Activated CD4-positive, alpha-beta memory T cell treated with anti-CD3 and anti-CD28 coated beads for 36 hours (primary cell): ENCODE measurements at regions of chr9 and their contacts with region 1.

Region 1: GRCh38 chr9:128552153-128552743 is at the start of gene SPTAN1:
- DNase-seq: peak; percentile 97
- H3K4me3 Mint-ChIP-seq: peak within 1 kb of the TSS; percentile 96
- H3K27ac Mint-ChIP-seq: peak within 1 kb of the TSS; percentile 95
- H3K4me1 Mint-ChIP-seq: peaks cover 32% of the 10 kb centered on the region
- H3K27me3 Mint-ChIP-seq: no peaks in the 10 kb centered on the region
- total RNA-seq, gene SPTAN1: 228 TPM

Region 2: DNA sequence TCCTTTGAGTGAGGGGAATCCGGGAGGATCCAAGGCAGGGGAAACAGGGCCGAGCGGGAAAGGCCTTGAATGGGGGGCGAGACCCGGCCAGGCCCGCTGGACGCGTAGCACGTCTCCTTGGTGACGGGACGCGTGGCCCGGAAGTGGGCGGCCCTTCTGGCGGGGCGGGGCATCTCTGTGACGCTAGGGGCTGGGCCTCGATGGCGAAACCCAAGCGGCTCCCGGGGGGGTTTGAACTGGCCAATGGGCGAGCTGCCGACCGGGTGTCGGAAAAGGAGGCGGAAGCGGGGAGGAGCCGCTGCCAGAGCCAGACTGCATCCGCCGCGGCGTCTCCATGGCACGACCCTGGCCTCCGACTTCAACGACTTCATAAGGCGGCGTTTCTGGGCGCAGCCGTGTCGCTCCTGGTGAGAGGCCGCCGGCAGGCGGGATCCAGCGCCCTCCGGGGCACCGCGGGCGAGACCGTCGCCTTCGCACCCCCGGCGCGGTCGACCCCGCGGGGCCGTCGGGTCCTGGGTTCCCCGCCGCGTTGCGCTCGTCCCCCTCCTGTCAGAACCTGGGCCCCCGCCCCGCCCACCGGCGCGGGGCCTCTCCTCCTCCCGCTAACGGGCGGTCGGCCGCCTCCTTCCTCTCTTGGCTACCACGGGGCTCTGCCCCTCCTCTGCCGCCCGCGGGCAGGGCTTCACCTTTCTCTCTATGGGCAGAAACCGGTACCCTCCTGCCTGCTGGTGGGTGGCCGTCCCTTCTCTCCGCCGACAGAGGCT is 96.2 kb before region 1 on chr9 and contains the start of gene ODF2:
- CTCF ChIA-PET with region 1: no interaction called
- POLR2A ChIA-PET with region 1: no interaction called
- intact Hi-C with region 1: loop called (anchors 1 kb)
- DNase-seq: peak; percentile 99
- H3K4me3 Mint-ChIP-seq: peak within 1 kb of the TSS; percentile 85
- H3K27ac Mint-ChIP-seq: peak within 1 kb of the TSS; percentile 81
- H3K4me1 Mint-ChIP-seq: peaks cover 16% of the 10 kb centered on the region
- H3K27me3 Mint-ChIP-seq: no peaks in the 10 kb centered on the region
- total RNA-seq, gene ODF2: 68.9 to 72.8 TPM

Region 3: DNA sequence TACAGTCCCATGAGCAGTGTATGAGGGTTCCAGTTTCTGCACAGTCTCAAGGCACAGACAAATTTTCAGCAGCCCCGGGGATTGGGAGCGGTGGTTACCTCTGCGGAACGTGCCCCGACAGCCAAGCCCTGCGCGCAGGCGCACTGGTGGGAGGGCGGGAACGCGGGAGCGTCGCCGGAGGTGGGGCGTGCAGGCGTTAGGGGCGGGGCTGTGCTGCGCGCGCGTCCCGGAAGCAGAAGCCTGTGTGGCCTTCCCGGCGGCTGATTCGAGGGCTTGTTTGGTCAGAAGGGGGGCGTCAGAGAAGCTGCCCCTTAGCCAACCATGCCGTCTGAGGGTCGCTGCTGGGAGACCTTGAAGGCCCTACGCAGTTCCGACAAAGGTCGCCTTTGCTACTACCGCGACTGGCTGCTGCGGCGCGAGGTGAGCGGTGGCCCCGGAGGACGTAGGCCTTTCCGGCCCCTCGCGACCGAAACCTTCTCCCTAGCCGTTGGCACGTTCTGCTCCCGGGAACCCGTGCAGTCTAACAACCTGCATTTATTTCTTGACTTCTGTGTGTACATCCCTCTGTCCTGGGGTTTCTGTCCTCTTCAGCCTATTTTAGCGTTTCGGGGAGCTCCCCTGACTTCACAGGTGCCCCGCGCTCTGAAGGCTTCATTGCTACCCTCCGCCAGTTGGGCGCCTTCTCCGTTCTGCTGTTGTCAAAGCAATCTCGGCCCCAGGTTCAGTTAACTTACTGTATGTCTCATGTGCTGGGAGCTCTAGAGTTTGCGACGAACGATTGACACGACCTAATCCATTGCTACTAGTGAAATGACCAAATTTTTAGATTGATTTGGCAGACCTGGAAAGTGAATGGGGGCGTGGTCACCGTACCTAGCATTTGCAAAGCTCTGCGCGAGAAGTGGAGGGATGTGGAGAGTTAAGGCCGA is 47.5 kb before region 1 on chr9 and contains the start of gene GLE1:
- CTCF ChIA-PET with region 1: no interaction called
- POLR2A ChIA-PET with region 1: interaction called, 8 read pairs
- intact Hi-C with region 1: loop called (anchors 1 kb)
- DNase-seq: peak; percentile 97
- H3K4me3 Mint-ChIP-seq: peak within 1 kb of the TSS; percentile 99
- H3K27ac Mint-ChIP-seq: peak within 1 kb of the TSS; percentile 97
- H3K4me1 Mint-ChIP-seq: peaks cover 26% of the 10 kb centered on the region
- H3K27me3 Mint-ChIP-seq: no peaks in the 10 kb centered on the region
- total RNA-seq, gene GLE1: 55.6 to 57.0 TPM

Region 4: GRCh38 chr9:128521956-128522355 is 30.3 kb before region 1 on chr9:
- CTCF ChIA-PET with region 1: no interaction called
- POLR2A ChIA-PET with region 1: no interaction called
- intact Hi-C with region 1: no loop called
- DNase-seq: no peak
- H3K4me3 Mint-ChIP-seq: no peak overlapping the region
- H3K27ac Mint-ChIP-seq: no peak overlapping the region
- H3K4me1 Mint-ChIP-seq: no peaks in the 10 kb centered on the region
- H3K27me3 Mint-ChIP-seq: no peaks in the 10 kb centered on the region

Region 5: DNA sequence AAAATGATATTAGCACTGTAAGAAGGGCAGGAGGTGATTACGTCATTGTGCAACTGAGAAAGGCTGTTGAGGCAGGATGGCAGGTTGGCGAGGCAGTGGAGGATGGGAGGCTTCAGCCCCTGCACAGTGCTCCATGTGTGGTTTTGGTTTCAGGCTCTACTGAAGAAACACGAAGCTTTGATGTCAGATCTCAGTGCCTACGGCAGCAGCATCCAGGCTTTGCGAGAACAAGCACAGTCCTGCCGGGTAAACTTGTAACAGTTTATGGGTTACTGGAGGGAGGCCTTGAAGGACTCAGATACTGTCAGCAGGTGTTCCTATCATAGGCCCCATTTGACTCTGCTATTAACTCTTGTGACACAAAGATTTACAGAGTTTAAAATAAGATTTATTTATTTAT is 35.2 kb after region 1 on chr9:
- CTCF ChIA-PET with region 1: no interaction called
- POLR2A ChIA-PET with region 1: interaction called, 4 read pairs
- intact Hi-C with region 1: loop called (anchors 2 kb)
- DNase-seq: peak; percentile 80
- H3K4me3 Mint-ChIP-seq: no peak overlapping the region
- H3K27ac Mint-ChIP-seq: peak overlapping the region; percentile 77
- H3K4me1 Mint-ChIP-seq: peaks cover 13% of the 10 kb centered on the region
- H3K27me3 Mint-ChIP-seq: no peaks in the 10 kb centered on the region

Region 6: DNA sequence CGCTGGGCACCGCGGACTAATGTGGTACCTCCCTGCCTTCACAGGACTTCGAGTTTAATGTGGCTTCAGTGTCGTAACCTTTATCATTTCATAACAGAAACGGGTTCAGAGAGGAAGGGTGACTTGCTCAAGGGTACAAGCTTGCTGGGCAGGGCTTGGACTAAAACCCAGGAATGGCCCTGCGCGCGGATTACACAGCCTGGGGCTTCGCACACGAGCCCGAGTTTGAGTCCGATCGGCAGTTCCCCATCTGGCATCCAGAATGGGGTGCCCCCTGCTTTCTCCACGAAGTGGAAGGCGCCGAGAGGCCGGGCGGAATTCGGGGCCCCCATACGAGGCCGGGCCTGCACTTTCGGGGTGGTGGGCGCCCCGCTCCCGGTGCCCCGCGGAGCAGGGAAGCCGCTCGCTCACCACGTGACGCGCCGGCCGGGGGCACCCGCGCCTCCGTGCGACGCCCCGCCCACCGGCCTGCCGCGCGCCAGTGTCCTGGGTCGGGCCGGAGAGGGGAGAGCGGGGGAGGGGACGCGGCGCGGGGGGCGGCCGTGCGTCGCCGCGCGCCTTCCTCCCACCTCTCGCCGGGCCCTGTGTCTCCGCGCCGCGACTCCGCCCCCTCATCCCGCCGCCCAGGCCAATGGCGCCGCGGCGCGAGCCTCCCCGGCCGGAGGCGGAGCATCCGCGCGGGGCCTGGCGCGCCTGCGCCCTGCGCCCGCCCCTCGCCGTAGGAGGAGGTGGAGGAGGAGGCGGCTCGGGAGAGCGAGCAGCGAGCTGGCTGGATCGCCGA is 136.5 kb after region 1 on chr9 and contains the start of gene SET:
- CTCF ChIA-PET with region 1: no interaction called
- POLR2A ChIA-PET with region 1: interaction called, 5 read pairs
- intact Hi-C with region 1: loop called (anchors 1 kb)
- DNase-seq: peak; percentile 95
- H3K4me3 Mint-ChIP-seq: peak within 1 kb of the TSS; percentile 81
- H3K27ac Mint-ChIP-seq: peak within 1 kb of the TSS; percentile 95
- H3K4me1 Mint-ChIP-seq: peaks cover 54% of the 10 kb centered on the region
- H3K27me3 Mint-ChIP-seq: no peaks in the 10 kb centered on the region
- total RNA-seq, gene SET: 578 to 592 TPM

Region 7: GRCh38 chr9:128947422-128948301 is 395.4 kb after region 1 on chr9 and contains the starts of genes DOLK and NUP188:
- CTCF ChIA-PET with region 1: no interaction called
- POLR2A ChIA-PET with region 1: no interaction called
- intact Hi-C with region 1: loop called (anchors 2 kb)
- DNase-seq: peak; percentile 98
- H3K4me3 Mint-ChIP-seq: peak within 1 kb of the TSS; percentile 98
- H3K27ac Mint-ChIP-seq: peak within 1 kb of the TSS; percentile 98
- H3K4me1 Mint-ChIP-seq: peaks cover 27% of the 10 kb centered on the region
- H3K27me3 Mint-ChIP-seq: no peaks in the 10 kb centered on the region
- total RNA-seq, gene DOLK: 5.7 to 6.7 TPM
- total RNA-seq, gene NUP188: 121 to 124 TPM

Region 8: DNA sequence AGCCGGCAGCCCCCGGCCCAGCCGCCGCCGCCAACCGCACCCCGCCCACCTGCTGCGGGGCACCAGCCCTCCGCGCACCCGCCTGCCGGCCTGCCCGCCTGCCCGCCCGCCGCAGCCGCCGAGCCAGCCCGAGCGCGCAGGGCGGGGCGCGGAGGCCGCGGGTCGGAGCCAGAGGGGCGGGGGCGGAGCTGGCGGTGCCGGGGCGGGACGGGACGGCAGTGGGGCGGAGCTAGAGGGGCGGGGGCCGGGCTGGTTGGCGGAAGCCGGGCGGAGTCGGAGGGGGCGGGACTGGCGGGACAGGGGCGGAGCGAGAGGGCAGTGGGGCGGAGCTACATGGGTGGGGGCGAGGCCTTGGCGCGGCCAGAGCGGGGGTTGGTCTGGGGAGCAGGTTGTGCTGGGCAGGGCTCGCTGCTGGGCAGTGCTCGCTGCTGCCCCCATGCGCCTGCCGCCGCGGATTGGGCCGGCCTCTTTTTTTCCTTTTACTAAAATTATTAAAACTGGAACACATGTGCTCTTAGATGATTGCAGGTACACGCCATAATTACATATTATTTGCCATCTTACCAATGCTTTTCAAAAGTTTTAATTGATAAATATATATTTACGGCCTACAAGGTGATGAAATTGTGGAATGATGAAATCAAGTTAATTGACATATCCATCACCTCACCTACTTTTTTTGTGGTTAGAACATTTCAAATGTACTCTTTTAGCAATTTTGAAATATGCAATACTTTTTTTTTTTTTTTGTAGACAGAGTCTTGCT is 476.1 kb after region 1 on chr9 and contains the start of gene SH3GLB2:
- CTCF ChIA-PET with region 1: interaction called, 3 read pairs
- POLR2A ChIA-PET with region 1: interaction called, 3 read pairs
- intact Hi-C with region 1: loop called (anchors 2 kb)
- DNase-seq: peak; percentile 97
- H3K4me3 Mint-ChIP-seq: peak within 1 kb of the TSS; percentile 84
- H3K27ac Mint-ChIP-seq: peak within 1 kb of the TSS; percentile 55
- H3K4me1 Mint-ChIP-seq: peaks cover 22% of the 10 kb centered on the region
- H3K27me3 Mint-ChIP-seq: no peaks in the 10 kb centered on the region
- total RNA-seq, gene SH3GLB2: 59.5 to 62.3 TPM